ENCODE measurements at regions of chr6 and their contacts with region 1.

Region 1: DNA sequence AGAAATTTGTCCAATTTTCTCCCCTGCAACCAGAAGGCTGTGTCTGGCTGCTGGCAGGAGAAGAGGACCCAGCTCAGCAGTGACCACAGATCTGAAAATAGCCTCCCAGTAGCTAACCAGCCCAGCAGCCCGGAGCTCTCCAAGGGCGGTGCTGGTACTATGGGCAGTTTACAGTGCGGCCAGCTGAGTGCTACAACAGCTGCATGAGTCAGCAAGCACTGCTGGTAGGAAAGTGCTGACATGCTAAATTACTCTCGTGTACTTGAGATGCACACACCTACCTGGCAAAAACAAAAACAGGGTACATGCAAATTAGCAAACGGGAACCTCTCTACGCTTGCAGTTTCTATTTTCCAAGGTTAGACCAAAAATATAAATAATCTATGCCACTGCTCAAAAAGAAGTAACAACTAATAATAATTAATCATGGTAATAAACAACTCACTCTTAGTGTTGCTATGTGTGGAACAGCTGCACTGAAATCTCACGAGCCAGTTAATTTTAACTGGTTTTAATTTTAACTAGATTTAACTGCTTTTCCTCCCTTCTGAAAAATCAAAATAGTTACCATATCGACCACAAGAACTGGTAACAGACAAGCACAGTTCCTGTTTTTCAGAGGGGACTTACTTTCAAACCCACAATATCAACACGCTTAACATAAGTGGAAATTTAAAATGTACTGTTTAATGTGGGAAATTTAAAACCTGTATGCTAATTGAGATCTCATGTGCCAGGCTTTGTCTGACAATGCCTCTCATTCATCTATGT is 10.8 kb downstream of the BACH2 start:
- DNase-seq: peak; percentile 68 to 83 (median 76)
- H3K4me3 ChIP-seq: peak overlapping the region; percentile 1 to 58
- H3K4me3 Mint-ChIP-seq: peak overlapping the region; percentile 80 to 95 (median 86)
- H3K27ac ChIP-seq: peak overlapping the region; percentile 46
- H3K27ac Mint-ChIP-seq: peak overlapping the region; percentile 77 to 98 (median 89)
- H3K4me1 ChIP-seq: peaks cover 32% of the 10 kb centered on the region
- H3K4me1 Mint-ChIP-seq: peaks cover 47 to 89% (median 68%) of the 10 kb centered on the region in 4 donors
- H3K27me3 ChIP-seq: no peaks in the 10 kb centered on the region
- H3K27me3 Mint-ChIP-seq: peaks cover 0 to 2% of the 10 kb centered on the region in 2 donors

Region 2: DNA sequence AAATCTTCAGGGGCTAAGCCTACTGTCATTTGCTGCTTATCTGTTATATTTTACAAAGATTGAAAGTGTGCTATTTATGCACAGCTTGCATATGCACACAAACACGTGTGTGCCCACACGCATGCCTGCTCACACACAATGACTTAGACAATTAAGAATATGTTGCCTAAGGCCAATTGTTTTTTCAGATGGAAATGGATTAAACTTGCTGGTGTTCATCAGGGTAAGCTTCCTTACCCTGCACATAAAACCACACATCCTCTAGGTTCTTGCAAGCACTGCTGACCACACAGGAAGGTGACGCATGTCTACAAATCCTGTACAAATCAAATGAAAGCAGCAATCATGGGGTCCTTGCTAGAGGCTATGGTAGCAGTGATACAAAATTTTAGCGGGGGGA is 333.1 kb before region 1 on chr6:
- CTCF ChIA-PET with region 1: interaction called, 4 read pairs
- POLR2A ChIA-PET with region 1: interaction called, 10 read pairs
- intact Hi-C with region 1: no loop called
- DNase-seq: peak; percentile 80 to 90 (median 83)
- H3K4me3 ChIP-seq: no peak overlapping the region
- H3K4me3 Mint-ChIP-seq: peak overlapping the region in 7 of 8 donors; percentile 37 to 83 (median 68)
- H3K27ac ChIP-seq: peak overlapping the region; percentile 7
- H3K27ac Mint-ChIP-seq: peak overlapping the region; percentile 84 to 92 (median 89)
- H3K4me1 ChIP-seq: peaks cover 53% of the 10 kb centered on the region
- H3K4me1 Mint-ChIP-seq: peaks cover 46 to 71% (median 59%) of the 10 kb centered on the region in 4 donors
- H3K27me3 ChIP-seq: no peaks in the 10 kb centered on the region
- H3K27me3 Mint-ChIP-seq: no peaks in the 10 kb centered on the region